ENCODE measurements at regions of chr11 and their contacts with region 1.

Region 1: DNA sequence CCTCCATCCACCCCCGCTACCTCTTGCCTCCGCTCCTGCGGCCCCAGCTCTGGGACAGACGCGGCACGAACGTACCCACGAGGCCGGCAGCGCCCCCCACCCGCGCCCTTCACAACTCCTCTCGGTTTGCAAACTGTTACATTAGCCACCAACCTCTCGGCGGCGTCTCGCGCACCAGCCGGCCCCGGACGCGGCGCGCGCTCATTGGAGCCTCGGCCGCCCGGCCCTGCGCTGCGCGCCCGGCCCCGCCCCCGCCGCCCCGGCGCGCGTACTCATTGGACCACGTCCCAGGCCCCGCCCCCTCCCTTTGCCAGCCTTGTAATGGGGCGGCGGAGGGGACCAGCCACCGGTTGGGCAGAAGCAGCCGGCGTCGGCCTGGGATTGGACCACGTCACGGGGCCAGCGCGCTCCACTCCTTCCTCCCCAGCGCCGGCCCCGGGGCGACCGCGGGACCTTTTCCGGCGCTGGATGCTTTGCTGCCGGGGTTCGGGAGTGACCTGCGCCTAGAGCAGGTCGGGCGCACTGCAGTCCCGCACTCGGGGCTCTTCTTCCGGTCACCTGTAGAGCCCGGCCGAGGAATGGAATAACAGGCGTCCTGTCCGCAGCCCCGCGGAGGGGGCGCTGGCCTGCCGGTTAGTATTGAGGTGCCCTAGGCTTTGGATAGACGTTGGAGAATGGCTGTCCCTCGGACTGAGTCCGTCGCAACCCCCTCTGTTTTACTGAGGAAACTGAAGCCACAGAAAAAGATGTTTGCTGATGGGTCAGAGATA is at the start of gene HYOU1:
- DNase-seq: peak; percentile 86
- H3K4me3 ChIP-seq: peak within 1 kb of the TSS; percentile 83
- H3K27ac ChIP-seq: peak within 1 kb of the TSS; percentile 77
- H3K27me3 ChIP-seq: no peaks in the 10 kb centered on the region
- CTCF ChIP-seq: peak; percentile 39
- polyA plus RNA-seq, gene HYOU1: 123 and 144 TPM in 2 replicates

Region 2: GRCh38 chr11:119038884-119039283 is 18.3 kb before region 1 on chr11:
- CTCF ChIA-PET with region 1: no interaction called
- POLR2A ChIA-PET with region 1: no interaction called
- DNase-seq: no peak
- H3K4me3 ChIP-seq: no peak overlapping the region
- H3K27ac ChIP-seq: no peak overlapping the region
- H3K27me3 ChIP-seq: peaks cover 2% of the 10 kb centered on the region
- CTCF ChIP-seq: no peak

Region 3: DNA sequence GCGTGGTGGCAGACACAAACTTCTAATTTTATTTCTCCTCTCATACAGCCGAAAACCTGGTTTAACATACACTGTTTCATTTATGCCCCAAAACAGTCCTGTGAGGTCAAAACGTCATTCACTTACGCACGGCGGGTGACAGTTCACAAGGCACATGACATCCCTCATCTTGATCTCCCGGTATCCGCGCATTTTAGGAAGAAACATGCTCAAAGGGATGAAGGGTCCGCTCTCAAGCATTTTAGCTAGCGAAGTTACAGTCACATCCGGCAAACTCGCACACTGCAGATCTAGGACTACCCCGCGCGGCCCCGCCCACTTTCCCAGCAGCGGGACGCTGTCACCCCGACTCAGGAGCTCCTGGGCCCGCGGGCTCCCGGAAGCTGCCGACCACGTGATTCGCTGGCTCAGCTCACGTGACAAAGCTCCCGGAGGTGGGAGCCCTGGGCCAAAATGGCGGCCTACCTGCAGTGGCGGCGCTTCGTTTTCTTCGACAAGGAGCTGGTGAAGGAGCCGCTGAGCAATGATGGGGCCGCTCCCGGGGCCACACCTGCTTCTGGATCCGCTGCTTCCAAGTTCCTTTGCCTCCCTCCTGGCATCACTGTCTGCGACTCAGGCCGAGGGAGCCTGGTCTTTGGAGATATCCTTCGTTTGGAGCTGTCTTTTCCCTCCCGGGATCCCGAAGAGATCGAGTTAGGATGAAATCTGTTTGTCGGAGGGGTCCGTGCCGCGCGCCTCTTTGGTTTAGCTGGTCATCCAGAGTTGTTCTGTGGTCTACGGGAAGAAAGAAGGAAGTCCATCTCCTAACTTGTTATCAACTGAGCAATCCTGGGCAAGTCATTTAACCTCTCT is 10.4 kb after region 1 on chr11 and contains the start of gene VPS11:
- CTCF ChIA-PET with region 1: interaction called, 4 read pairs
- POLR2A ChIA-PET with region 1: interaction called, 27 read pairs
- DNase-seq: peak; percentile 92
- H3K4me3 ChIP-seq: peak within 1 kb of the TSS; percentile 99
- H3K27ac ChIP-seq: peak within 1 kb of the TSS; percentile 88
- H3K27me3 ChIP-seq: no peaks in the 10 kb centered on the region
- CTCF ChIP-seq: no peak
- polyA plus RNA-seq, gene VPS11: 9.9 and 19.9 TPM in 2 replicates

Region 4: GRCh38 chr11:119509969-119510401 is 452.8 kb after region 1 on chr11:
- CTCF ChIA-PET with region 1: no interaction called
- POLR2A ChIA-PET with region 1: no interaction called
- DNase-seq: peak; percentile 49
- H3K4me3 ChIP-seq: no peak overlapping the region
- H3K27ac ChIP-seq: peak overlapping the region; percentile 21
- H3K27me3 ChIP-seq: peaks cover 34% of the 10 kb centered on the region
- CTCF ChIP-seq: no peak

Measured in AG04450 (cell line).